Right lobe of liver (tissue), 6 donors: ENCODE measurements at regions of chr20 and their contacts with region 1.

Region 1: DNA sequence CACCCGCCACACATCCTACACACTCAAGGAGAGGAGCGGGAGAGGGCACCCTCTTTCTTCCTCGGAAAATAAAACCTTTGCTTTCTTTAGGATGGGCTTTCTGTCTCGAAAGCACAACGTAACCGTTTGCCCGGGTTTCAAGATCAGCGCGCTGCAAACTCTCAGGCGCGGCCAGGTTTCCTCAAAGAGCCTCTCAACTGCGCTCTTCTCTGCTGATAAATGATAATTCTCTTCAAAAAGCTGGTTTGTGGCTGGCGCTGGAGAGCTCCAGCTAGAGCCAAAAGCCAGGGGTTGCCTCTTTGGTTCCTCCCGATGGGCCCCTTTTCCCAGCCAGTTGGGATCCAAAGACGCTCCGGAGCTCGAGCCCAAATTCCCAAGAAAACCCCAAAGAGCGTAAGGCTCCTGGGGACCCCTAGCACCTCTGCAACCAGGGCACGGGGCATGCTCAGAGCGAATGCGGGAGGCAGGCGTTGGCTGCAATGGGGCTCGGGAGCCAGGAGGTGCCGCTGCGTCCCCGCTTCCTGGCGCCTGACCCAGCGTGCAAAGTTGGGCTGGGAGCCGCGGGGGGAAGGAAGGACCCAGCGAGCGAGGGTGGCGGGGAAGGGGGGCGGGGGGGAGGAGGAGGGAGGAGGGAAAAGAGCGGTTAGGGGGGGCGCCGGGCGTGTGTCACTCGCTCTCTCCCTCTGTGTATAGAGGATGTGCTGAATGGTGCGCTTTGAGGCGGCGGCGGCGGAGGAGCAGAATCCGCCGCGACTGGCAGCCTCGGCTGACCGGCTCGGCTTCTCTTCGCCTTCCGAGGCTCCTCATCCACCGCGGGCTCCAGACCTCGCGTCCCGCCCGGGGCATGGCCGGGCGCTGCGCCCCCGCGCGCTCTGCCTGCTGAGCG is at the start of gene PLCB1:
- DNase-seq: peak; percentile 83 to 90 (median 86)
- ATAC-seq: peak; percentile 96 to 98 (median 98)
- H3K4me3 ChIP-seq: peak within 1 kb of the TSS; percentile 64 to 94 (median 69)
- H3K27ac ChIP-seq: peak within 1 kb of the TSS; percentile 73 to 90 (median 75)
- H3K4me1 ChIP-seq: no peaks in the 10 kb centered on the region
- H3K27me3 ChIP-seq: no peaks in the 10 kb centered on the region
- CTCF ChIP-seq: peak; percentile 68 to 90 (median 74)
- POLR2A ChIP-seq: no peak
- total RNA-seq, gene PLCB1: 5.0 to 9.9 (median 5.7) TPM

Region 2: DNA sequence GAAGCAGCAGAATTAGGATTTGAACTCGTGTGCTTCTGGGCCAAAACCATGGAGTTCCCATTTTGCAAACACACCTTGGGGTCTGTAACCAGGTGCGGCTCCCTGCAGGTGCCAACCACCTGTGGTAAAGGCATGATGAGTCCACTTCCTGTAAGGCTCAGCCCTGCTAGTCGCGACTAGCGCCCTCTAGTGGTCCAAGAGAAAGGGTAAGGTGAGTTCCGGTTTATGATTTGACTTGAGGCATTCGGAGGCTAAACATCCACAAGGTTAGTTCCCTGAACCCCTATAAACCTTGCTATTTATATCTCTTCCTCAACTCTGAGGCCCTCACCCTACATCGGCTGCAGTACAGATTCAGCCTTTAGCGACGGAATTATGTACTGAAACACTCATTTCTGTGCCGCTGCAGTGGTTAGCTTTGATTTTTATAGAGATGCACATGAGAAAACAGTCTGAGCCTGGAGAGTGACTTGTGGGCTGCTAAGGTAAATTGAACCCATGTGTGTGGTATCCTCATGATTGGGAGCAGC is 173.7 kb after region 1 on chr20:
- intact Hi-C with region 1: loop called in 1 of 2 experiments (anchors 10 kb)
- DNase-seq: peak; percentile 54 to 63 (median 62)
- ATAC-seq: peak; percentile 75 to 88 (median 81)
- H3K4me3 ChIP-seq: no peak overlapping the region
- H3K27ac ChIP-seq: no peak overlapping the region
- H3K4me1 ChIP-seq: no peaks in the 10 kb centered on the region
- H3K27me3 ChIP-seq: no peaks in the 10 kb centered on the region
- CTCF ChIP-seq: peak; percentile 42 to 83 (median 60)
- POLR2A ChIP-seq: no peak

Region 3: GRCh38 chr20:8344106-8344505 is 212.3 kb after region 1 on chr20:
- intact Hi-C with region 1: no loop called
- DNase-seq: no peak
- ATAC-seq: no peak
- H3K4me3 ChIP-seq: no peak overlapping the region
- H3K27ac ChIP-seq: no peak overlapping the region
- H3K4me1 ChIP-seq: no peaks in the 10 kb centered on the region
- H3K27me3 ChIP-seq: no peaks in the 10 kb centered on the region
- CTCF ChIP-seq: no peak
- POLR2A ChIP-seq: no peak

Region 4: DNA sequence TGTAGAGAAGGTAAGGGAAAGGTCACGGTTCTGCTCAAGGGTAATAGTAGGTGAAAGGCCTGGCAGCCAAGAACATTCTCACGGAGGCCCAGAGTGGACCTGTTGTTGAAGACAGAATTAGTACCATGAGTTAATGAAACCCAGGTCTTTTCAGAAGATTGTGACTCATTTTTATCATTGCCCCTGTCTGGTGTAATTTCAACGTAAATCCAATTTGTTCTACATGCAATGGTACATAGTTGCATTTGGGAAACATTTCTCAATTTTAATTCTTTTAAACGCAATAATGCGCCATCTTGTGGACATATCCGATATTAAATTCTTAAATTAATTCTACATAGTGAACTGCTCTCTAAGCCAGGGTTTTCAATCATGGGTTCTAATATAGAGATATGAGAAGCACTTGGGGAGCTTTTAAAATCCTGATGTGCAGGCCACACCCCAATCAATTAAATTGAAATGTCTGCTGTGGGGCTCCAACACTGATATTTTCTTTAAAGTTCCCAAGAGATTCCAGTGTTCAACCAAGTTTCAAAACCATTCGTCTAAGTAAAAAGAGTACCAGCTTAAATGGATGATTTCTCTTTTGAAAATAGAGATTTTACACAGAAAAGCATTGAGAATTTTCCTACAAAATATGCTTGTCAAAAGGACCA is 257.7 kb after region 1 on chr20:
- intact Hi-C with region 1: loop called in 1 of 2 experiments (anchors 5 kb)
- DNase-seq: no peak
- ATAC-seq: peak; percentile 64 to 80 (median 76)
- H3K4me3 ChIP-seq: no peak overlapping the region
- H3K27ac ChIP-seq: no peak overlapping the region
- H3K4me1 ChIP-seq: peaks cover 0 to 14% (median 0%) of the 10 kb centered on the region in 4 donors
- H3K27me3 ChIP-seq: no peaks in the 10 kb centered on the region
- CTCF ChIP-seq: peak; percentile 50 to 60 (median 57)
- POLR2A ChIP-seq: no peak